Dendritic cell treated with granulocyte-macrophage colony-stimulating factor and Interleukin-4, amounts not matched to agents 40 ng/mL and 50 ng/mL, for 4 days (primary cell): ENCODE measurements at regions of chr4 and their contacts with region 1.

Region 1: GRCh38 chr4:53196882-53197771 is 168.7 kb downstream of the SCFD2 start:
- H3K4me3 Mint-ChIP-seq: no peak overlapping the region
- H3K27ac Mint-ChIP-seq: no peak overlapping the region
- H3K4me1 Mint-ChIP-seq: peaks cover under 1% of the 10 kb centered on the region
- H3K27me3 Mint-ChIP-seq: no peaks in the 10 kb centered on the region

Region 2: DNA sequence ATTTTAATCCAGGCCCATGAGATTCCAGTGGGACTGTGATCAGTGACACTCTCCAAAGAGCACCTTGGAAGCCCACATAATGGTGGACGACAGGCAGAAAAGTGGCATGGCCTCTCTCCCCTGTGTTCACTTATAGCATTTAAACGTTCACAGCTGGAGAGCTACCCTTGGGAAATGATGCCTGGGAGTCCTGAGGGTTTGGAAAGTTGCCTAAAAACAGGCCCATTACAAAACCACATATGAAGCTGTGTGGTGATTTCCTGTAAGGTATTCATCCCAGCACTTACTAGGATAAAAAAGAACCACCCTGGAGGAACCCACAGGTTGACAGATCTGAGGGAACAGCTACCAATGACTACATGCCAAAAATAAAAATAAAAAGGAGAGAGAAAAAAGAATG is 141.9 kb before region 1 on chr4:
- intact Hi-C with region 1: no loop called
- H3K4me3 Mint-ChIP-seq: no peak overlapping the region
- H3K27ac Mint-ChIP-seq: no peak overlapping the region
- H3K4me1 Mint-ChIP-seq: peaks cover 6% of the 10 kb centered on the region
- H3K27me3 Mint-ChIP-seq: no peaks in the 10 kb centered on the region

Region 3: GRCh38 chr4:53377319-53378170 is 180.4 kb after region 1 on chr4 and contains the start of gene FIP1L1:
- intact Hi-C with region 1: loop called (anchors 5 kb)
- H3K4me3 Mint-ChIP-seq: peak within 1 kb of the TSS; percentile 99
- H3K27ac Mint-ChIP-seq: peak within 1 kb of the TSS; percentile 98
- H3K4me1 Mint-ChIP-seq: peaks cover 27% of the 10 kb centered on the region
- H3K27me3 Mint-ChIP-seq: no peaks in the 10 kb centered on the region

Region 4: GRCh38 chr4:53804719-53805118 is 607.6 kb after region 1 on chr4:
- intact Hi-C with region 1: loop called (anchors 2 kb)
- H3K4me3 Mint-ChIP-seq: no peak overlapping the region
- H3K27ac Mint-ChIP-seq: no peak overlapping the region
- H3K4me1 Mint-ChIP-seq: no peaks in the 10 kb centered on the region
- H3K27me3 Mint-ChIP-seq: no peaks in the 10 kb centered on the region

Region 5: DNA sequence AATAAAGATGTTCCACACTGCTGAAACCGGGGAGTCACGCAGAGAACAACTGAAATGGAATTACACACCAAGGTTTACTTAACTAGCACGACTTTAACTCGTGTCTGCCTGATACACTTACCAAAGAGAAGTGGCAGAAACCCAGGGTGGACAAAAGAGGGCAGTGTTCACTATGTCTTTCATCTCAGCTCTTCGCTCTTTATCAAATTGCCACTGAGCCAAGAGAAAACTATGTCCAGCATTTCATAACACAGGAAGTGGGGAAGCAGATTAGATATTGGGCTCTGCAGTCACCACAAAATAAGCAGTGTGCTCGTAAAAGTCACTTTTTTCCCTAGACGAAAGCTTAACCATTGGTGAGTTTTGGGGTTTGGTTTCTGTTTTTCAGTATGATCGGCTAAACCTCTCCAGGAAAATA is 711.5 kb after region 1 on chr4:
- intact Hi-C with region 1: loop called (anchors 5 kb)
- H3K4me3 Mint-ChIP-seq: peak overlapping the region; percentile 26
- H3K27ac Mint-ChIP-seq: no peak overlapping the region
- H3K4me1 Mint-ChIP-seq: peaks cover 20% of the 10 kb centered on the region
- H3K27me3 Mint-ChIP-seq: peaks cover 27% of the 10 kb centered on the region

Region 6: DNA sequence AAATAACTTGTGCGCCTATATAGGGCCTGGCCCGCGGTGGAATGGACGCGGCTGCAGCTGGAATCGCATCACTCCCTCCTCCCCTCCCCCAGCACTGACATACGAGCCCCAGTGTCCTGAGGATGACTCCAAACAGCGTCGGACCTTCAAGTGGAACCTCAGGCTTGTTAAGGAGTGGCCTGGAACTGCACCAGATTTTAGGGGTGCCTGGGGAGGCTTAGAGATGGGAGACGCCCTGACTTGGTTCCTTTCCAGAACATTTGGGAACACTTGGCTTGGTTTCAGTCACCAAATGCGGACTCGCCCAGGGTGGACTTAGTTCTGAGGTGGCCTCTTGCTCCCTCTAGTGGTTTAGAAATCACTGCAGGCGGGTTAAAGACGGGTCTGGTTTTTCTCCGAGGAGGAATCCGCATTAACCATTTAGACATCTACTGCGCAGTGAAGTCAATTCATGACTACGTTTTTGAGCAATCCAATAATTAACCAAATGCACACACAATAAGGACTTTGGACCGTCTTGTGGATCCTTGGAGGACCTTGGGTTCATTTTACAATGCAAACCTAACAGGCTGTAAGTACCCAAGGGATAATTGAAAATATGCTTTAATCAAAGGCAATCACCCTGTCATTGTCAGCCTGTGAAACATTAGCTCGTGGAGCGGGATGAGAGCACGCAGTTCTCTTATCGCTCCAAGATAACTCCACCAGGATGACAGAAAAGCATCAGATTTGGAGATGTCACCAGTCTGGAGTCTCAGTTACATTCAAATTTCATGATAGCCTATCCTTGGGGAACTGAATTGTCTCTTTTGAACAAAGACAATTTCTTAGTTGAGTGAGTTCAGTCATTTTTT is 1020.7 kb after region 1 on chr4:
- intact Hi-C with region 1: loop called (anchors 5 kb)
- H3K4me3 Mint-ChIP-seq: peak overlapping the region; percentile 52
- H3K27ac Mint-ChIP-seq: no peak overlapping the region
- H3K4me1 Mint-ChIP-seq: peaks cover 11% of the 10 kb centered on the region
- H3K27me3 Mint-ChIP-seq: peaks cover 65% of the 10 kb centered on the region